Posterior cingulate gyrus (tissue), 11 donors: ENCODE measurements at regions of chr2 and their contacts with region 1.

Region 1: GRCh38 chr2:86079981-86080911 is 25.4 kb downstream of the POLR1A start:
- DNase-seq: peak; percentile 54 to 97 (median 84)

Region 2: DNA sequence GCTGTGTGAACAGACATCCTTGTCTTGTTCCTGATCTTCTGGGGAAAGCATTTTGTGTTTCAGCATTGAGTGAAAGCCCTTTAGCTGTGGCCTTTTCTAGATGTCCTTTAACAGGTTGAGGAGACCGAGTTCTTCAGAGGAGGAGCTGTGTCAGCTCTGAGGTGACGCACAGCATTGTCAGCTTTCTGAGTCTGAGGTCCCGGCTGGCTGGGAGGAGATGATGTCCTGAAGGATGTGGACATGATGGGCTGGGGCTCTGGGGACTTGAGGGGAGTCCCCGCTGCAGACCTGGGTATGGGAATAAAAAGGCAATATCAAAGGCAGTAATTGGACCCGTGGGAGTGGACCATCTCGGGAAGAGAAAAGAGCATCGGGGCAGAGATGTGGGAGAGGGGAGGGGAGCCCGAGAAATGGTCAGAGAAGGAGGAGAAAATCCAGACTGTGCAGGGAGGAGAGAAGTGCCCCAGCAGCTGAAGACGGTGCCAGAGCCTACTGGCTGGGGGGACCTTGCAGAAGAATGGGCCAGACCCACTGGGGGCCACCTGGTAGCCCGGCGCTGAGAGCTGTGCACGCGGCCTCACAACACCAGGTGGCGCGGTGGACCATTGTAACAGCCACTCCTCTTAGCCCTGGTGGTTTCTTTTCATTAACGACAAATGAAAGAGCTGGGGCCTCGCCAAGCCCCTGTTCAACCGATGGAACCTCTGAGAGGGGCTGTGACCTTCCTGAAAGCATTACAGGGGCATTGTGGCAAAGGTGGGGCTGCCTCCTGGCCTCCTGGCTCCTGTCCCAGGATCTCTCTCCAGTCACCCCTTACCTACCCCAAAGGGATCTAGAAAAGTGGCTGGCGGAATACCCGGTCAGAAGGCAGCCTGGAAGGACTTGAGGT is 253.0 kb before region 1 on chr2:
- intact Hi-C with region 1: loop called (anchors 1 kb)
- DNase-seq: peak; percentile 50 to 96 (median 79)

Region 3: DNA sequence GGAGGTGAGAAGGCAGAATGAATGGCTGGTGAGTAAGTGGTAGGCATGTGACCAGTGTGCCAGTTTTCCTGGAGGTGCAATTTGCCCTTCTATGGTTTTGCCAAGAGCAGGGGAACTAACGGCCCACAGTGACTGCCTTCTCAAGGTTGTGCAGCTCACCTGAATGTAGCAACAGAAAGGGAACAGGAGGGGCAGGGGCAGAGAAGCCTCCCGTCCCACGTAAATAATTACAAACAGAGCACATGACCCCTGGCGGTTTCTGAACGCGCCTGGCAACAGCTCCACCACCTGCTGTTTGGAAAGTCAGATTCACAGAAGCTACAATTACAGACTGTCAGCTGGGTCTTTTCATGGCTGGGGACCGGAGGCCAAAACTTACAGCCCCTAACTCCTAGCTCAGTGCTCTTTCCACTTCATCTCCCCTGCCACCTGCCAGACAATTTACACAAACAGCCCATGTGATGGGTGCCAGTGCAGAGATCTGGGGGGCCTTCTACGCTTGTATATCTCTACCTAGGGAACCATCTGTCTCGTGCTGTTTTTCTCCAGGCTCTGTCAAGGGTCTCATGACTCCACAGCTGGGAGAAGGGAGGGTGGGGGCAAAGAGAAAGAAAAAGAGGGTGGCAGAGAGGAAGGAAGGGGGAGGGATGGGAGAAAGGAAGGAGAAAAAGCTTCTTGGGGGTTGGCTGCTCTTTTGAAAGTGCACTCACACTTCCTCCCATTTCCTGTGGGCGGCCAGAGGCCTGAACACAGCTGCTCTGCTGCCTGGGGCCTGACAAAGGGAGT is 44.2 kb before region 1 on chr2:
- intact Hi-C with region 1: loop called (anchors 5 kb)
- DNase-seq: peak in 9 of 10 donors; percentile 41 to 94 (median 58)

Region 4: GRCh38 chr2:86174445-86174844 is 94.2 kb after region 1 on chr2:
- intact Hi-C with region 1: no loop called
- DNase-seq: no peak